Astrocyte of the spinal cord (primary cell): ENCODE measurements at regions of chr22 and their contacts with region 1.

Region 1: GRCh38 chr22:38181453-38182247 is at the start of gene PLA2G6:
- DNase-seq: peak; percentile 100
- H3K4me3 ChIP-seq: peak within 1 kb of the TSS; percentile 54
- CTCF ChIP-seq: no peak

Region 2: DNA sequence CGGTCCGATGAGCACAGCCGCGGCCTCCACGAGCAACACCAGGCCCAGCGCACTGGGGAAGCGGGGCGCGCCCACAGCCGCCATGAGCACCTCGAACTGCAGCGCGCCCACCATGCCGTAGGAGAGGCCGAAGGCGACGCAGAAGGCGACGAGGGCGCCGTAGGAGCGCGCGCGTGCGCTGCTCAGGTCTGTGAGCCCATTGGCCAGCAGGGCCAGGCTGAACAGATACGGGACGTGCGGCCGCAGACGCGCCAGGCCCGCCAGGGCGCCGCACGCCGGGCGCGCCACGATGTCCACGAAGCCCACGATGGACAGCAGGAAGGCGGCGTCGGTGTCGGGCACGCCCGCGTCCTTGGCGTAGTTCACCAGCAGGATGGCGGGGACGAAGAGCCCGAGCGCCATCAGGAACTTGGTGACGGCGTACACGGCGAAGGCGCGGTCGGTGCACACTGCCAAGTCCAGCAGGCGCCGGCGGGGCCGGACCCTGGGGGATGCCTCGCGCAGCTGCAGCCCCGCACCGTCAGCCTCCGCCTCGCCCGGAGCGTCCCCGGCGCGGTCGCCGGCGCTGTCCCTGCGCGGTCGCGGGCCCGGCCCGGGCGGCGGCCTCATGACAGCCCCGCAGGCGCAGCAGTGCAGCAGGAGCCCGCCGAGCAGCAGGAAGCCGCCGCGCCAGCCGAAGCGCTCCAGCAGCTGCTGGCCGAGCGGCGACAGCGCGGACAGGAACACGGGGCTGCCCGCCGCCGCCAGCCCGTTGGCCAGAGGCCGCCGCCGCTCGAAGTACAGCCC is 100.6 kb before region 1 on chr22:
- in situ Hi-C with region 1: no loop called
- DNase-seq: peak; percentile 24
- H3K4me3 ChIP-seq: peak overlapping the region; percentile 7
- CTCF ChIP-seq: no peak

Region 3: DNA sequence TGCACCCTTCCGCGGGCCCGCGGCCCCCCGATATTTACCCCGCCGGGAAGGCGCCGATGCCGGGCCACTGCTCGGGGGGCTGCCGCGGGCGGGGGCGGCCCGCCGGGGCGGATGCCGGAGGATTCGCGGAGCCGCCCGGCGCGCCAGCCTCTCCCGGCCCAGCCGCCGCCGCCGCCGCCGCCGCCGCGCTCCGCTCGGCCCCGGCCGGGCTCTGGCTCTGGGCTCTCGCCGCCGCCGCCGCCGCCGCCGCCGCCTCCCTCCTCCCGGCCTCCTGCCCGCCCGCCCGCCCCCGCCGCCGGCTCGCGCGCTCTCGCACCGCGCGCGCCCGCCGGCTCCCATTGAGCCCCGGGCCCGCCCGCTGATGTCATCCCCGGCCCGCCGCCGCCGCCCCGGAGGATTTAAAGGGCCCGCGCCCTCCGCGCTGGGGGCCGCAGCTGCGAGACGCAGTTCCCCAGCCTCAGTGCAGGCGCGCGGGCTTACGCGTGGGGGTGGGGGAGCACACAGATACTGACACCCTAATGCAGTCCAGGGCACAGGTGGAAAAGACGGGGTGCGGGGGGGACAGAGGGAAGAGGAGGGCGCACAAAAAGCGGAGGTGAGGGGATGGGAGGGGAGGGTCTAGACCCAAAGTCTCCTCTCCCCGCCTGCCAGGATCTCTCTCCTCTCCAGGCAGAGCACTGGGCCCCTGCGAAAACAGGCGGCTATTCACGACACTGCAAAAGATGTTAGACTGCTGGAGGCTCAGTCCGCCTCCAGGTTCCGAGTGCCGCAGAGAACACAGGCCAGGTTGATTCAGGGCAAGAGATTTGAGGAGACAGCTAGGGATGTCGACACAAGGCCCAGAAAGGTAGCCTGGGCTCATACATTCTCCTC is 135.7 kb after region 1 on chr22 and contains the start of gene CSNK1E:
- in situ Hi-C with region 1: loop called (anchors 25 kb)
- DNase-seq: peak; percentile 69
- H3K4me3 ChIP-seq: peak within 1 kb of the TSS; percentile 87
- CTCF ChIP-seq: no peak